ENCODE measurements at regions of chr6 and their contacts with region 1.

Region 1: DNA sequence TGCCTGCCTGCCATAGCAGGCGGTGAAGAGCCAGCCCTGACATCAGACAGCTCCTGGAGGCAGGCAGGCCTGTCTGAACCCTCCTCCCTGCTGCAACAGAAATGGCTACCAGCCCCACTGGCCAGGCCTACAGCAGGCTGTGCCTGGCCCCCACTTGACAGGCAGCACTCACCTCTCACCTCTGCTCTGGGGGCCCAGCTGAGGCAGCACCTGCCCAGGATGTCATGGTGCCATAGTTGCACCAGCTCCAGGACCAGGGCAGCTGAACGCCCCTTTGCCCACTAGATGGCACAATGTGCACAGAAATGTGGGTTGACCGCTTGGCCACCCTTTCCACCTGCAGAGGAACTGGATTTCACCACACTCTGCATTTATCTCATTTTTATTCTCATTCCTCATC is 30.6 kb downstream of the MRPL14 start:
- DNase-seq: peak; percentile 79
- ATAC-seq: peak; percentile 86 to 87

Region 2: DNA sequence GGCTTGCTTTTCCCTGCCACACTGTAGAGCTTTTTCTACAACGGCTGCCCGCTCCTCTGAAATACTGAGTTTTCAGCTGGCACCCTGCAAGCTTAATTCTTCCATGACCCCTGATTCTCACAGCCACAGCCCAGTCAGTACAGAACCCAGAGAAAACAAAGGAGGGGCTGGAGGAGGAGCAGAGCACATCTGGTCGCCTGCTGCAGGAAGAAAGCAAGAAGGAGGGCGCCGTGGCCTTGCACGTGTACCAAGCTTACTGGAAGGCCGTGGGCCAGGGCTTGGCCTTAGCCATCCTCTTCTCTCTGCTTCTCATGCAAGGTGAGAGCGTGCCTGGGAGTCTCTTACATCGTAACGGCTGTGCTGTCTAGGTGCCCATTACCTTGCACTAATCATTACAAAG is 652.6 kb before region 1 on chr6:
- intact Hi-C with region 1: no loop called
- DNase-seq: no peak
- ATAC-seq: no peak

Region 3: DNA sequence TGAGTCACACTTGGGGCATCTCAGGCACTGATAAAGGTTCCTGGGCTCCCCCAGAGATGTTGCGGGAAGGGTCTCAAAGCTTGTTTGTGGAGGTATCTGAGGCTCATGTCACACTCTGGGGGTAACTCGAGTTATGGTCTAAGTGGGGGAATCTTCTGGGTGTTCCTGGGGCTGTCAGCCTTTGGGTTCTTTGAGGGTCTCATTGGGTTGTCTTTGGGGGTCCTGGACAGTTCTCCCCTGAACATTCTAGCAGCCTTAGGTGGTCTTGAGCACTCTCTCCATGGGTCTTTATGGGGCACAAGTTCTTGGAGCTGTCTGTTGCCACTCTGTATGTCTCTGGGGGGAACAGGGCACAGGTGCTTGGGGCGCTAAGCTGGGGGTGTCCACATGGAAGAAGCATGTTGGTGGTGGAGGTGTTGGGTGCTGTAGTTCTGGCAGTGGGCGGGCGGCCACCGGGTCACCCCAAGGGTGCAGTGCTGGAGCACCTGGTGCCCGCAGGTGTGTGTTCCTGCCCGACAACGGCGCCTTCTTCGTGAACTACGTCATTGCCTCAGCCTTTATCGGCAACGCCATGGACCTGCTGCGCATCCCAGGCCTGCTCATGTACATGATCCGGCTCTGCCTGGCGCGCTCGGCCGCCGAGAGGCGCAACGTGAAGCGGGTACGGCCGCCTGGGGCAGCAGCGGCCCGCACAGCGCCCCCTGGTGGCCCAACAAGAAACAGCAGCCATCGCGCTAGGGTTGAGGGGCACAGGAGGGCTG is 54.9 kb after region 1 on chr6:
- intact Hi-C with region 1: loop called (anchors 2 kb)
- DNase-seq: peak; percentile 77
- ATAC-seq: peak; percentile 73 to 74

Region 4: DNA sequence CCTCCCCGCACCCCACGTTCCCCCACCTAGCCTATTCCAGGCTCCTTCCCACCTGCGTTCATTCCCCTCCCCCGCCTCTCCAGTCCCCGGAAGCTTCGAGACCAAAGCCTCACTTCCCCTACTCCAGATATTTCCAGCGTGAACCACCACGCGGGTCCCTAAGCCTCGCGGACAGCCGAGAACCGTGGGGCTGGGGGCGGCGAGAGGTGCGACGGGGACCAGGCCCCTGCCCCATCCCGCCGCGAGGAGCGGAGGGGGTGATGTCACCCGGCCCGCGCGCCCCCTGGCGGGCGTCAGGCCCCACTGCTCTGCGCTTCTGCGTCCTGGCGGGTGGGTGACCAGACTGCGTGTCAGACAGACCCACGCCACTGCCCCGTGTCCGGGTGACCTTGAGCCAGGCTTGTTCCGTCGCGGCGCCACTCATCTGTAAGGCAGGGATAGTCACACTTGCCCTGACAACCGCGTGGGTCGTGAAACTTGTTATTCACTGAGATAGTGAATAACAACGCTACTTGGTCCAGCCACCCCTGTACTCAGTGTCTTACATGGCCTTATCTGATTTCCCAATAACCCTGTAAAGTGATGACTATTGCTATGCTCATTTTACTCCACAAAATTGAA is 141.3 kb after region 1 on chr6:
- intact Hi-C with region 1: loop called (anchors 10 kb)
- DNase-seq: peak; percentile 83
- ATAC-seq: peak; percentile 80 to 86

Region 5: GRCh38 chr6:44265007-44265721 is 168.6 kb after region 1 on chr6 and contains the start of gene NFKBIE:
- intact Hi-C with region 1: loop called in 1 of 2 experiments (anchors 10 kb)
- DNase-seq: peak; percentile 98
- ATAC-seq: peak; percentile 94 to 95
- total RNA-seq, gene NFKBIE: 3.8 to 5.8 TPM

Region 6: DNA sequence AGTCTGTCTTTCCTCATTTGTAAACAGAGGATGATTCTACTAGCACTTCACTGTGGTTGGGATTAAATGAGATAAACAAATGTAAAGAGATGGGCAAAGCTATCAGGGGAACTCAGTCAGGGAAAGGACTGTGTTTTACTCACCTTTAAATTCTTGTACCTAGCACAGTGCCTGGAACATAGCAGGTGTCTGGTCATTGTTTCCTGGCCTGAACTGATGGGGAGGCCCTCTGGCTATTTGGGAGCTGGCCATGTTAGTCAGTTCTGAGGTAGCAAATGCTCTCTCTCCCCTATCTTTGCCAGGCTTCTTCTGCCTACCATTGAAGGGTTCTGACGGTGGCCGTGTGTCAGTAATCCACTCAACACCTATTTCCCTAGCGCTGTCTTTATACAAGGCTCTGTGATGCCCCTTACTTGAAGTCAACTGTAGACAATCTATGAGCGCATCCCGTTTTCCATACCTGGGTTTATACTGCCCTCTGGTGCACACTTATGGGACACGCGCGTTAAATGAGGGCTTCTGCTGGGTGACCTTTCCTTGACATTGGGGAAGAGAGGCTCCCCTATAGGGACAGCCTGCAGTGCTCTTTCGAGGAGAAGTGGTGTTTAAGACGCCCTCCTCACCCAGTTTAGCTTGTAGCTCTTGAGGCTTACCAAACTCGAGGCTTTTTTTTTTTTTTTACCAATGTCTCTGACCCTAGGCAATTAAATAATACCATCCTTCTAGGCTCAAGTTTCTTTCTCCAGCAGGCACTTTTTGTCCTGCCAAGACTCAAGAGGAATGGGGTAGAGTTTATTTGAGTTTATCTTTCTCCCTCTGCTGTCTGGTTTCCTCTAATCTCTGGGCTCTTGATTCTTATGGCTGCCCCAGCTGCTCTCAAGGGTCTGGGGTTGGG is 241.9 kb after region 1 on chr6:
- intact Hi-C with region 1: loop called in 1 of 2 experiments (anchors 5 kb)
- DNase-seq: peak; percentile 38
- ATAC-seq: peak; percentile 61 to 77